ENCODE measurements at regions of chr15 and their contacts with region 1.

Region 1: GRCh38 chr15:77821188-77821958 is 188.7 kb upstream of the LINGO1 start:
- DNase-seq: peak; percentile 41 to 87
- H3K4me3 ChIP-seq: no peak overlapping the region
- H3K27ac ChIP-seq: no peak overlapping the region
- H3K4me1 ChIP-seq: peaks cover 0 to 18% (median 11%) of the 10 kb centered on the region in 4 experiments; a peak in 6 of 7 replicates
- H3K27me3 ChIP-seq: peaks cover 23 to 42% (median 39%) of the 10 kb centered on the region in 4 experiments
- CTCF ChIP-seq: peak; percentile 94 to 98 (median 95)
- EP300 ChIP-seq: no peak
- POLR2A ChIP-seq: no peak
- RAD21 ChIP-seq: peak; percentile 92 to 96

Region 2: GRCh38 chr15:77642793-77643430 is 178.5 kb before region 1 on chr15:
- CTCF ChIA-PET with region 1: interaction called, 70 read pairs
- POLR2A ChIA-PET with region 1: no interaction called
- DNase-seq: no peak
- H3K4me3 ChIP-seq: no peak overlapping the region
- H3K27ac ChIP-seq: no peak overlapping the region
- H3K4me1 ChIP-seq: peaks cover 0 to 5% (median 2%) of the 10 kb centered on the region in 4 experiments; a peak in 3 of 7 replicates
- H3K27me3 ChIP-seq: no peaks in the 10 kb centered on the region; a peak in 1 of 7 replicates
- CTCF ChIP-seq: no peak
- EP300 ChIP-seq: no peak
- POLR2A ChIP-seq: no peak
- RAD21 ChIP-seq: no peak

Region 3: GRCh38 chr15:77693576-77693975 is 127.8 kb before region 1 on chr15:
- CTCF ChIA-PET with region 1: interaction called, 10 read pairs
- POLR2A ChIA-PET with region 1: no interaction called
- DNase-seq: no peak
- H3K4me3 ChIP-seq: no peak overlapping the region
- H3K27ac ChIP-seq: no peak overlapping the region
- H3K4me1 ChIP-seq: peaks cover 0 to 4% (median 1%) of the 10 kb centered on the region in 4 experiments; a peak in 2 of 7 replicates
- H3K27me3 ChIP-seq: no peaks in the 10 kb centered on the region
- CTCF ChIP-seq: no peak
- EP300 ChIP-seq: no peak
- POLR2A ChIP-seq: no peak
- RAD21 ChIP-seq: no peak

Region 4: GRCh38 chr15:77738441-77739302 is 82.7 kb before region 1 on chr15:
- CTCF ChIA-PET with region 1: interaction called, 16 read pairs
- POLR2A ChIA-PET with region 1: interaction called, 5 read pairs
- DNase-seq: peak in 1 of 2 experiments; percentile 67
- H3K4me3 ChIP-seq: peak overlapping the region in 1 of 4 experiments; percentile 38; a peak in 3 of 8 replicates
- H3K27ac ChIP-seq: no peak overlapping the region
- H3K4me1 ChIP-seq: peaks cover 11 to 36% (median 22%) of the 10 kb centered on the region in 4 experiments
- H3K27me3 ChIP-seq: no peaks in the 10 kb centered on the region; a peak in 1 of 7 replicates
- CTCF ChIP-seq: no peak
- EP300 ChIP-seq: no peak
- POLR2A ChIP-seq: no peak
- RAD21 ChIP-seq: no peak

Region 5: DNA sequence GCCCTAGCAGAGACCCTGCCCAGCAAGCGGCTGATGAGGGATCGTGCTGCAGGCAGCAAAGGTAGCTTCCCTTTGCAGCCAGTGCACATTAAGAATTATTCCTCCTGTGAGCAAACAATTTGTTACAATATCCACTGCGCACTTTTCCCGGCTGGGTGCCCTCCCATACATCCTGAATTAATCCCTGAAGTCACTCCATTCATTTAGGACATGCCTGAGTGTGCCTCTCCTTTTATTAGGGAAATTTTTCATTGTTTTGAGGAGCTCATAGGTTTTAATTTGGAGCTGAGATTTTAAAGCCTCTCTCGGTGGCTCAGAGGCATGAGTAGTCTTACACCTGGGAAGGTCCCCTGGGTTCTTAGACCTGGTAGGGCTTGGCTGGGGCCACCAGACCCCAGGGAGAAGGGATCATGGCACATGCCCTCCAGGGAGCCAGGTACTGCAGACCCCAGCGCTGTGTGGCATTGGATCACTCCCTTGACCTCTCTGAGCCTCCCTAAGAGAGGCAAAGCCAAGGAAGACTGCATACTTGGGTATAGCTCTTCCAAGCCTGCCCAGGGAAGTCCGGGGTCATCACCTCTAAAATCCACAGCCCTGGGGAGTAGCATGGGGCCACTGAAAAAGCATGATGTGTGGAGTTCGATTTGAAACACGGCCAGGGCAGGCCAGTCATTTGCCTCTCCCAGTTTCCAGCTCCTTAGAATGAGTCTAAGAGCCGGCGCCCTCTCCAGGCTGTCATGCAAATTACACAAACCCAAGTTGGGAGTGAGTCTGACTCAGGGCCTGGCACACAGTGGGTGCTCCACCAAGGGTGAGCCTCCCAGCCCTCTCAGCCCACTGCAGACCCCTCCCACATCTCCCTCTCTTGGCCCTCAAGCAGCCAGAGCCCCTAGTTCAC is 36.7 kb before region 1 on chr15:
- CTCF ChIA-PET with region 1: interaction called, 40 read pairs
- POLR2A ChIA-PET with region 1: no interaction called
- DNase-seq: peak in 1 of 2 experiments; percentile 88
- H3K4me3 ChIP-seq: no peak overlapping the region
- H3K27ac ChIP-seq: no peak overlapping the region
- H3K4me1 ChIP-seq: peaks cover 0 to 10% (median 7%) of the 10 kb centered on the region in 4 experiments; a peak in 6 of 7 replicates
- H3K27me3 ChIP-seq: no peaks in the 10 kb centered on the region
- CTCF ChIP-seq: peak; percentile 55 to 81 (median 79)
- EP300 ChIP-seq: no peak
- POLR2A ChIP-seq: no peak
- RAD21 ChIP-seq: peak; percentile 67 to 78

Region 6: DNA sequence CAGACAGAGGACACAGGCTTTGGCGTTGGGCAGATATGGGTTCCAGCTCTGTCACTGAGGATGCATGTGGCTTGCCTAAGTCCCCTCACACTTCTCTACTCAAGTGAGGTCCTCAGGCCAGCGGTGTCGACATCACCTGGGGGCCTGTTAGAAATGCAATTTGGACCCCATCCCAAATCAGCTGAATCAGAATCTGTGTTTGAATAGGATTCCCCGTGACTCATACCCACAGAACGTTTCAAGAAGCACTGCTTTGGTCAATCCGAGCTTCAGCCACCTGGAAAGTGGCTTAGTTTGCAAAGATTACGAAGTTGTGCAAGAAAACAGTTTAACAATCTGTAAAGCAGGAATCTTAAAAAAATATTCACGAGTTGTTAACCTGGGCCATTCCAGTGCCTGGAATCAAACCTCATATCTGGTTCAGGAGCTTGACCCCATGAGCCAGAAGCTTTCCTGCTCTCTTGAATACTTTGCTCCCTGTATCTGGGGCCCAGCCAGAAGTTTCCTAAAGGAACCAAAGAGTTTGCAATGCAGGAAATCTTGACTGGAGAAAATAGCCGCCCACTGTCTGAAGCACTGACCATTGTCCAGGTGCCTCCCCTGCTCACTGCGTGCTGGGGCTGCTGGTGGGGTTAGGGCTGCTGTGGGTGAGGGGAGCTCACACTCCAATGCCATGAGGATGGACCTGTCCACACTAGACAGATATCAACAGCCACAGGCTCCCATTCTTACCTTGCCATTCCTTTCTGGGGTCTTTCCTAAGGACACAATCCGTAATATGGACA is 19.8 kb after region 1 on chr15:
- CTCF ChIA-PET with region 1: interaction called, 16 read pairs
- POLR2A ChIA-PET with region 1: no interaction called
- DNase-seq: no peak
- H3K4me3 ChIP-seq: no peak overlapping the region
- H3K27ac ChIP-seq: no peak overlapping the region
- H3K4me1 ChIP-seq: peaks cover 0 to 7% (median 4%) of the 10 kb centered on the region in 4 experiments; a peak in 2 of 7 replicates
- H3K27me3 ChIP-seq: no peaks in the 10 kb centered on the region
- CTCF ChIP-seq: no peak
- EP300 ChIP-seq: no peak
- POLR2A ChIP-seq: no peak
- RAD21 ChIP-seq: no peak